GM23248 (cell line): ENCODE measurements at regions of chr5 and their contacts with region 1.

Region 1: GRCh38 chr5:121949867-121950266 is 11.9 kb upstream of the SRFBP1 start:
- DNase-seq: peak; percentile 78
- H3K4me3 ChIP-seq: no peak overlapping the region
- H3K27ac ChIP-seq: no peak overlapping the region
- H3K4me1 ChIP-seq: no peaks in the 10 kb centered on the region
- H3K27me3 ChIP-seq: no peaks in the 10 kb centered on the region

Region 2: GRCh38 chr5:122156724-122157325 is 207.0 kb after region 1 on chr5:
- in situ Hi-C with region 1: loop called (anchors 25 kb)
- DNase-seq: peak; percentile 82
- H3K4me3 ChIP-seq: no peak overlapping the region
- H3K27ac ChIP-seq: no peak overlapping the region
- H3K4me1 ChIP-seq: peaks cover 46% of the 10 kb centered on the region
- H3K27me3 ChIP-seq: no peaks in the 10 kb centered on the region